Natural killer cell (primary cell): ENCODE measurements at regions of chr2 and their contacts with region 1.

Region 1: DNA sequence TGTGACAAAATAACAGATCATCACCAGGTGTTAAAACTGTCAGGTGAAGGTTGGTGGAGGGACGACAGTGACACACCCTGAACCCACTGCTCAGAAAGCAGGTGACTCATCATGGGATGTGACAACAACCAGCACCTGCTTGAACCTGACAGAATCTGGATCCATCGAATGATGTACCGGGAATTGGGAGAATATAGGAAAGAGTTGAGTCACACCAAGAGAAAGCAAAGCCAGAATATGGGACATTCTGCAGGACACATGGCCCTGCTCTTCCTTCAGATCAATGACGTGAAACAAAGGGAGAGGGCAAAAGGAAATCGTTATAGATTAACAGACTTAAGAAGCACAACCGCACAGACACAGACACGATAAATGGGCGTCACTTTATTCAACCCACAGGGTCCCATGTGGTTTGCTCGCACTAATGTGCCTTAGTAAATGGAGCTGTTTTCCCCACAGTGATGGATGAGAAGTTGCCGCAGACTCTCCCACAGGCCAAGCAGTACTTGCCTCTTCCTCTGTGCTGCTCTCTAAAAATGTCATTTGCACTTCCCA is 100.1 kb downstream of the CRACDL start:
- DNase-seq: peak in 1 of 2 donors; percentile 85
- ATAC-seq: peak; percentile 17 to 63 (median 60)
- H3K4me3 ChIP-seq: no peak overlapping the region
- H3K4me3 Mint-ChIP-seq: no peak overlapping the region
- H3K27ac ChIP-seq: no peak overlapping the region
- H3K27ac Mint-ChIP-seq: peak overlapping the region in 1 of 2 donors; percentile 29
- H3K4me1 ChIP-seq: peaks cover 39% of the 10 kb centered on the region
- H3K4me1 Mint-ChIP-seq: peaks cover 29 to 42% of the 10 kb centered on the region in 2 donors
- H3K27me3 ChIP-seq: no peaks in the 10 kb centered on the region
- H3K27me3 Mint-ChIP-seq: peaks cover 4 to 12% of the 10 kb centered on the region in 2 donors
- CTCF ChIP-seq: no peak

Region 2: GRCh38 chr2:98412751-98413458 is 423.0 kb before region 1 on chr2:
- intact Hi-C with region 1: loop called (anchors 1 kb)
- DNase-seq: peak; percentile 35 to 90
- ATAC-seq: peak; percentile 89 to 98 (median 96)
- H3K4me3 ChIP-seq: no peak overlapping the region
- H3K4me3 Mint-ChIP-seq: no peak overlapping the region
- H3K27ac ChIP-seq: no peak overlapping the region
- H3K27ac Mint-ChIP-seq: no peak overlapping the region
- H3K4me1 ChIP-seq: no peaks in the 10 kb centered on the region
- H3K4me1 Mint-ChIP-seq: peaks cover 0 to 5% of the 10 kb centered on the region in 2 donors
- H3K27me3 ChIP-seq: no peaks in the 10 kb centered on the region
- H3K27me3 Mint-ChIP-seq: peaks cover 0 to 3% of the 10 kb centered on the region in 2 donors
- CTCF ChIP-seq: peak; percentile 81

Region 3: DNA sequence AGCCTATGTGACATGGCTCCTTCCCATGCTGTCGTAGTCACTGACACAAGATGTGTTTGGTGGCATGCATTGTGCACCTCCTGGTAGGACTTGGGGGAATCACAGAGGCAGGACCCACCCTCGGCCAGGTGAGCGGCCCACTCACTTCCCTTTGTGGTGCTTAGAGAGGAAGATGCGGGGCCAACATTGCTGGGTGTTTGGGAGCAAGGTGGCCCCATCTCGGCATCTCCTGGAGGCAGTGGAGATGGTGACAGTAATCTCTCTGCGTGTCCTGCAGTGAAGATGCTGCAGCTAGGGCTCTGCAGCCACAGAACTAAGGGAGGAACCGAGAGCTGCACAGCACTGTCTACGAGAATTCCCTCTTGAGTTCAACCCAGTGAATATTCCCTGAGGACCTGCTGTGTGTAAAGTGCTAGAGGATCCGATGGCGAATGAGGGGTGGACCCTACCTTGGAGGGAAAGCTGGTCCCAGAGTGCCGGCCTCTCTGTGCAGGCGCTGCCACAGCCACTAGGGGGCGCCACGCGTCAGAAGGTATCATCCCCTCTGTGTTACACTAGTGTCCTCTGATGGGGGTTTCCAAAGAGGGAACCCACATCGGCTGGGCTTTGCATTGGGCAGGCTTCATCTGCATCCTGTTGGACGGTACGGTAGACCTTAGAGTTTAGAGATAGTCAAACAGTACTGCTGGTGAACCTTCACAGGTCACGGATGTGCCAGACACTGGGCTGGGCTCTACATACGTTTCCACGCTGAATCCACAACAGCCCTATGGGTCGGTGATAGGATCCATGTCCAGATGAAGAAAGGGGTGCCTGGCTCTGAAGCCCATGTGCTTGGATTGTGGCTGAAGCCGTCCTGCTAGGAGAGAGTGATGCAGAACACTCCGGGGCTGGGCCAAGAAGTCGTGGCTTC is 266.8 kb before region 1 on chr2:
- intact Hi-C with region 1: loop called (anchors 1 kb)
- DNase-seq: peak; percentile 70 to 79
- ATAC-seq: peak; percentile 72 to 97 (median 93)
- H3K4me3 ChIP-seq: no peak overlapping the region
- H3K4me3 Mint-ChIP-seq: no peak overlapping the region
- H3K27ac ChIP-seq: no peak overlapping the region
- H3K27ac Mint-ChIP-seq: peak overlapping the region; percentile 84 to 86
- H3K4me1 ChIP-seq: no peaks in the 10 kb centered on the region
- H3K4me1 Mint-ChIP-seq: peaks cover 5 to 25% of the 10 kb centered on the region in 2 donors
- H3K27me3 ChIP-seq: no peaks in the 10 kb centered on the region
- H3K27me3 Mint-ChIP-seq: no peaks in the 10 kb centered on the region
- CTCF ChIP-seq: peak; percentile 97

Region 4: GRCh38 chr2:98649135-98649991 is 186.5 kb before region 1 on chr2:
- intact Hi-C with region 1: loop called (anchors 1 kb)
- DNase-seq: peak; percentile 73 to 93
- ATAC-seq: peak; percentile 98 to 99 (median 99)
- H3K4me3 ChIP-seq: no peak overlapping the region
- H3K4me3 Mint-ChIP-seq: peak overlapping the region; percentile 74
- H3K27ac ChIP-seq: peak overlapping the region; percentile 38
- H3K27ac Mint-ChIP-seq: peak overlapping the region; percentile 83 to 90
- H3K4me1 ChIP-seq: peaks cover 28% of the 10 kb centered on the region
- H3K4me1 Mint-ChIP-seq: peaks cover 53 to 54% of the 10 kb centered on the region in 2 donors
- H3K27me3 ChIP-seq: no peaks in the 10 kb centered on the region
- H3K27me3 Mint-ChIP-seq: no peaks in the 10 kb centered on the region
- CTCF ChIP-seq: peak; percentile 98

Region 5: GRCh38 chr2:98810278-98810937 is 25.5 kb before region 1 on chr2:
- intact Hi-C with region 1: no loop called
- DNase-seq: no peak
- ATAC-seq: no peak
- H3K4me3 ChIP-seq: no peak overlapping the region
- H3K4me3 Mint-ChIP-seq: no peak overlapping the region
- H3K27ac ChIP-seq: no peak overlapping the region
- H3K27ac Mint-ChIP-seq: no peak overlapping the region
- H3K4me1 ChIP-seq: peaks cover 3% of the 10 kb centered on the region
- H3K4me1 Mint-ChIP-seq: peaks cover 6 to 8% of the 10 kb centered on the region in 2 donors
- H3K27me3 ChIP-seq: peaks cover 2% of the 10 kb centered on the region
- H3K27me3 Mint-ChIP-seq: peaks cover 7 to 30% of the 10 kb centered on the region in 2 donors
- CTCF ChIP-seq: no peak

Region 6: DNA sequence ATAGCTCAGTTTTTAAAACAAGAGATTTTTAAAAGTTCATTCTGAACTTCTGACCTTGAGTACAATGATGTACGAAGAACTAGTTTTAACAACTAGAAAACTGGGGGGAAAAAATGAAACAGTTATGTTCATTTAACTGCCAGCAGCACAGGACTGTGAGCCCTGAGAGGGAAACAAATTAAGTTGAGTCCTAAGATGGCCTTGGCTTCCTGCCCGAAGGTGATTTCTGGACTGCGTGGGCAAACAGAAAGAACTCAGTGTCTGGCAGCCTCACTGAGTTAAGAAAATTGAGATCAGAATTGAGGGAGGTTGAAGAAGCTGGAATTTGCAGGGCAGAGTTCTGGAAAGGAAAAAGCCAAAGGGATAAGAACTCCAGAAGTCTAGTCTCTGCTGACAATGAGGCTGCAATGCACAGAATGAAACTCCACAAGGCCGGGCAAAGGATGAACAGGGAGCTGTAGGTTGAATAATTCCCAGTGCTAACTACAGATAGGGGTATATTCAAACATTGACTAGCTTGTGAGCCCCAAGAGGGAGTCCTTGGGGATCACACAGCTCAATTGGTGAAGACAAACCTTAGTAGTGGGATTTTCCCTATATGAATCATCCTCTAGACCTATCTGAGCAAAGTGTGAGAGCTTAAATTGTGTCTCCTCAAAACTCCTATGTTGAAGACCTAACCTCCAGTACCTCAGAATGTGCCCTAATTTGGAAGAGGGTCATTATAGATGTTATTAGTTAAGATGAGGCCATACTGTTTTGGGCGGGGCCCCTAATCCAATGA is 113.2 kb after region 1 on chr2:
- intact Hi-C with region 1: no loop called
- DNase-seq: no peak
- ATAC-seq: no peak
- H3K4me3 ChIP-seq: no peak overlapping the region
- H3K4me3 Mint-ChIP-seq: no peak overlapping the region
- H3K27ac ChIP-seq: no peak overlapping the region
- H3K27ac Mint-ChIP-seq: no peak overlapping the region
- H3K4me1 ChIP-seq: no peaks in the 10 kb centered on the region
- H3K4me1 Mint-ChIP-seq: no peaks in the 10 kb centered on the region
- H3K27me3 ChIP-seq: no peaks in the 10 kb centered on the region
- H3K27me3 Mint-ChIP-seq: peaks cover 20 to 54% of the 10 kb centered on the region in 2 donors
- CTCF ChIP-seq: no peak

Region 7: DNA sequence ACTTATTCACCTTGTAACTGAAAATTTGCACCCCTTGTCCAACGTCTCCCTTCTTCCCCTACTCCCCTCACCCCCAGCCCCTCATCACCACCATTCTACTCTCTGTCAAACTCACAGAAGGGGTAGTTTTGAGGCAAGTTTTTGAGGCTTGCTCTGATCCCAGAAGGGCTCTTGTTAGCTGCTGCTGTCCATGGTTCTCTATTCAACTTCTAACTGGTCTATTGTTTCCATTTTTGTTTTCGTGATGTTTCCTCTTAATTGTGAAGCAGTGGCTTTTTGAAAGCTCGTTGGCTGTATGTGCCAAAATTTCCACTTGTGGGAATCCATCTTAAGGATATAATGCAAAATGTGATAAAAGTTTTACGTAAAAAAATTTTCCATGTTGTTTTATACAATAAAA is 192.7 kb after region 1 on chr2:
- intact Hi-C with region 1: no loop called
- DNase-seq: no peak
- ATAC-seq: no peak
- H3K4me3 ChIP-seq: no peak overlapping the region
- H3K4me3 Mint-ChIP-seq: no peak overlapping the region
- H3K27ac ChIP-seq: no peak overlapping the region
- H3K27ac Mint-ChIP-seq: no peak overlapping the region
- H3K4me1 ChIP-seq: no peaks in the 10 kb centered on the region
- H3K4me1 Mint-ChIP-seq: no peaks in the 10 kb centered on the region
- H3K27me3 ChIP-seq: no peaks in the 10 kb centered on the region
- H3K27me3 Mint-ChIP-seq: peaks cover 11 to 14% of the 10 kb centered on the region in 2 donors
- CTCF ChIP-seq: no peak

Region 8: DNA sequence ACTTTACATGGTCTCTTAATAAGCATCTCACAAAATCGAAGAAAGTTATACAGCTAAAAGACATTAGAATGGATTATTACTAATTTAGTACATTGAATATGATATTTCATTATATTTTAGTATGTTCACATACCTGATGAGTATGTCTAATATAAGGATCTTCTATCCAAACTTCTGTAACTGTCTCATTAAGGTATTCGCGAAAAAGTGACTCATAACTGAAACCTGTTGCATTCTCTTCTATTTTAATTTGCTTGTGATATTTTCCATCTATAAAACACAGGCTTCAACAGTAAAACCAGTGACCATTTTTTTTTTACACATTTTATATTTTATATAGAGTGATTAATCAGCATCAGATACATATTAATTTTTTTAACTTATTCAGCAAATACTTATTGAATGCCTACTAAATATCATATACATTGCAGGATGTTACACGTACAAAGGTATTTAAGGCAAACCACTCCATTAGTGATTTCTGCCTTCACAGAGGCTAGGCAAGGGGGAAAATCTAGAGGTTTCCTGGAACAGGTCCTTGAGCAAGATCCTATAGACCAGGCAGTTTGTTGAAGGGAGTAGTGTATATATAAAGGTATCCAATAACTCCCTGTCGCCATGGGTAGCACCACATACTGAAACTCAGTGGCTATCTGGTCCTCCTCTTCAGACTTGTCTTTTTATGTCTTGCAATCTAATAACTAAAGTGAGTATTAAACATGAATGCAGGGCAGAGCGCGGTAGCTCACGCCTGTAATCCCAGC is 335.7 kb after region 1 on chr2:
- intact Hi-C with region 1: loop called (anchors 10 kb)
- DNase-seq: no peak
- ATAC-seq: no peak
- H3K4me3 ChIP-seq: no peak overlapping the region
- H3K4me3 Mint-ChIP-seq: no peak overlapping the region
- H3K27ac ChIP-seq: no peak overlapping the region
- H3K27ac Mint-ChIP-seq: peak overlapping the region in 1 of 2 donors; percentile 6
- H3K4me1 ChIP-seq: no peaks in the 10 kb centered on the region
- H3K4me1 Mint-ChIP-seq: peaks cover 5 to 8% of the 10 kb centered on the region in 2 donors
- H3K27me3 ChIP-seq: no peaks in the 10 kb centered on the region
- H3K27me3 Mint-ChIP-seq: no peaks in the 10 kb centered on the region
- CTCF ChIP-seq: no peak